ENCODE measurements at regions of chr14 and their contacts with region 1.

Region 1: GRCh38 chr14:53539489-53540126 is 386.5 kb upstream of the DDHD1 start:
- DNase-seq: peak; percentile 53 to 86
- ATAC-seq: peak; percentile 92 to 96
- H3K4me3 ChIP-seq: no peak overlapping the region
- H3K27ac ChIP-seq: peak overlapping the region; percentile 34 to 61
- H3K4me1 ChIP-seq: peaks cover 17% of the 10 kb centered on the region
- CTCF ChIP-seq: peak; percentile 95
- EP300 ChIP-seq: no peak
- POLR2A ChIP-seq: no peak
- RAD21 ChIP-seq: peak; percentile 94 to 97

Region 2: GRCh38 chr14:53399057-53399456 is 140.6 kb before region 1 on chr14:
- CTCF ChIA-PET with region 1: no interaction called
- POLR2A ChIA-PET with region 1: no interaction called
- DNase-seq: peak; percentile 24 to 35
- ATAC-seq: peak; percentile 30 to 64; a peak in 3 of 6 replicates
- H3K4me3 ChIP-seq: no peak overlapping the region
- H3K27ac ChIP-seq: no peak overlapping the region
- H3K4me1 ChIP-seq: no peaks in the 10 kb centered on the region
- CTCF ChIP-seq: 0 out of 3 replicates have a peak, but pooled peaks have one; percentile 18
- EP300 ChIP-seq: no peak
- POLR2A ChIP-seq: no peak
- RAD21 ChIP-seq: no peak

Region 3: DNA sequence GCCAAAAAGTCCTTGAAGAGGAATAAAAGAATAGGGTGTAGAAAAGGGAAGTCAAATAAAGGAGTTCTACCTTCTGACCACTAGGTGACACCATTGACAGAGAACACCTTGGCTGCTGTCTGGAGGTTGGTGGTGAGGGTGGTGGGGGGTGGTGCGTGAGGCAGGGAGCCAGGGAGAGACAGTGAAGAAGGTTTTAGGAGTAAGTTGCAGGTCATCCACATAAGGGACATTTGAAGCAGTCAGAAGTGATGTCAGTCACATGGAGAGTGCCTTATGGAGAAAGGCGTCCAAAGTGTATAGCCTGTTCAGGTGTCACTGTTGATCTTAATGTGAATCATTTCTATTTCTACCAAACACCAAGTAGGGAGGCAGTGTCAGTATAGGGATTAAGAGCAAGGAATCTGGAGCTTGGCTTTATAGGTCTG is 107.2 kb before region 1 on chr14:
- CTCF ChIA-PET with region 1: interaction called, 15 read pairs
- POLR2A ChIA-PET with region 1: no interaction called
- DNase-seq: peak; percentile 47 to 55
- ATAC-seq: peak; percentile 89 to 91
- H3K4me3 ChIP-seq: no peak overlapping the region
- H3K27ac ChIP-seq: no peak overlapping the region
- H3K4me1 ChIP-seq: no peaks in the 10 kb centered on the region
- CTCF ChIP-seq: peak; percentile 69
- EP300 ChIP-seq: no peak
- POLR2A ChIP-seq: no peak
- RAD21 ChIP-seq: peak; percentile 76 to 80

Region 4: DNA sequence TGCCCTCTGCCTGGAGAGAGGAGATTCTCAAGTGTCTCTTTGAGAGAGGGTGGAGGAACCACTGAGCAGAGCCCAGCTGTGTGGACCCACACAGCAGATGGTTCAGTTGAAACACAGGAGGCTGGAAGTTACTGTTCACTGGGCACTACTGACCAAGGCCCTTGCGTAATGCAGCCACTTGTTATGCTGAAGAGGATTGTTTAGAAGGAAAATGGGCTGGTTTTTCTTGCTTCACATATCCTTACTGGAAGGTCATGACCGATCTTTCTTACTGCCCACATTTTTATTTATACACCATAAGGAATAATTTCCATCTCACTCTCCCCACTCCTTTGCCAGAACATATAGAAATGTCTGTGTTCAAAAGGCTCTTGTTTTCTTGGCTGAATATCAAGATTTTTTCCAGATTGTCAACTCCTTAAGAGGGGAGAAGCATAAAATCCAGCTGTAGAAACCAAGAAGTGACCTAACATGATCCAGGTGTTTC is 11.4 kb before region 1 on chr14:
- CTCF ChIA-PET with region 1: interaction called, 24 read pairs
- POLR2A ChIA-PET with region 1: no interaction called
- DNase-seq: no peak
- ATAC-seq: no peak
- H3K4me3 ChIP-seq: no peak overlapping the region
- H3K27ac ChIP-seq: no peak overlapping the region
- H3K4me1 ChIP-seq: no peaks in the 10 kb centered on the region
- CTCF ChIP-seq: no peak
- EP300 ChIP-seq: no peak
- POLR2A ChIP-seq: no peak
- RAD21 ChIP-seq: no peak

Region 5: DNA sequence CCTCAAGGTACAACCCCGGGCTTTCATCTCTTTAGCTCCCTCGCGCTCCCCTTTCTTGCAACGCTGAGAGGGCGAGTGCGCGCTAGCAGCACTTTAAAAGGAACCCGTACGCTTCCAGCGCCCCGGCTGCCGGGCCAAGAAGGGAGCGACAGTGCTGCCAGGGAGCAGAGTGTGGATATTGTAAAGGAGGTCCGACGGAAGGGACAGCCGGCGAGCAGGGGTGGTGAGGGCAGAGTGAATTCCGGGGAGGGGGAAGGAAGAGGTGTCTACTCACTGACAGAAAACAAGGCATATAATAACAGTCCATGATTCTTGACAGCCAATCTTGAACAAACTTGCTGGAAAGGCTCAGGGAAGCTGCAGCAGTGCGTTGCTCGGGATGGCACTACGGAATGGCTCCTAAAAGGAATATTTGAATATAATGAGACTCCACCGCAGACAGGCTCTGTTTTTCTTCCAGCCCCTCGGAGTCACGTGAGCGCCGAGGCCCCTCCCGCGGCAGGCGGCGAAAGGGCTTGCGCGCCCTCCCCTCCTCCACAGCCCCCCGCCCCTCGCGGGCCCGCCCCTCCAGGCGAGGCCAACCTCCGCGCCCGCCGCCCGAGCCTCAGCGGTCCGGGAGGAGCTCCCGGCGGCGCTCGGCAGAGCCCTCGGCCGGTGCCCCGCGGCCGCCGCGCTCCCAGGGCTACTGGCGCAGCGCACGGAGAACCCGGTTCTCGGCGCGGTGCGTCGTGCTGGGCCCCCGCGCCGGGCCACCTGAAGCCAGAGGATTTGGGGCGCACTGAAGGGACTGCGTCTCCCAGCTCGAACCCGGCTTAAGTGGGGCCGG is 413.6 kb after region 1 on chr14:
- CTCF ChIA-PET with region 1: interaction called, 23 read pairs
- POLR2A ChIA-PET with region 1: interaction called, 4 read pairs
- DNase-seq: peak; percentile 64 to 71
- ATAC-seq: peak; percentile 53 to 79
- H3K4me3 ChIP-seq: peak overlapping the region; percentile 53
- H3K27ac ChIP-seq: peak overlapping the region; percentile 65 to 81
- H3K4me1 ChIP-seq: peaks cover 5% of the 10 kb centered on the region; the same call in 1 of the 3 replicates
- CTCF ChIP-seq: 0 out of 3 replicates have a peak, but pooled peaks have one; percentile 6
- EP300 ChIP-seq: no peak
- POLR2A ChIP-seq: peak; percentile 72
- RAD21 ChIP-seq: no peak

Region 6: GRCh38 chr14:54329082-54329695 is 789.6 kb after region 1 on chr14:
- CTCF ChIA-PET with region 1: interaction called, 10 read pairs
- POLR2A ChIA-PET with region 1: no interaction called
- DNase-seq: peak; percentile 60 to 70
- ATAC-seq: peak; percentile 85 to 96
- H3K4me3 ChIP-seq: no peak overlapping the region
- H3K27ac ChIP-seq: no peak overlapping the region
- H3K4me1 ChIP-seq: no peaks in the 10 kb centered on the region
- CTCF ChIP-seq: peak; percentile 68
- EP300 ChIP-seq: no peak
- POLR2A ChIP-seq: no peak
- RAD21 ChIP-seq: peak; percentile 79 to 82

Measured in A549 (cell line).